Left colon (tissue), 2 donors: ENCODE measurements at regions of chr6 and their contacts with region 1.

Region 1: GRCh38 chr6:105077596-105078385 is 102.0 kb downstream of the POPDC3 start:
- DNase-seq: no peak
- ATAC-seq: no peak

Region 2: DNA sequence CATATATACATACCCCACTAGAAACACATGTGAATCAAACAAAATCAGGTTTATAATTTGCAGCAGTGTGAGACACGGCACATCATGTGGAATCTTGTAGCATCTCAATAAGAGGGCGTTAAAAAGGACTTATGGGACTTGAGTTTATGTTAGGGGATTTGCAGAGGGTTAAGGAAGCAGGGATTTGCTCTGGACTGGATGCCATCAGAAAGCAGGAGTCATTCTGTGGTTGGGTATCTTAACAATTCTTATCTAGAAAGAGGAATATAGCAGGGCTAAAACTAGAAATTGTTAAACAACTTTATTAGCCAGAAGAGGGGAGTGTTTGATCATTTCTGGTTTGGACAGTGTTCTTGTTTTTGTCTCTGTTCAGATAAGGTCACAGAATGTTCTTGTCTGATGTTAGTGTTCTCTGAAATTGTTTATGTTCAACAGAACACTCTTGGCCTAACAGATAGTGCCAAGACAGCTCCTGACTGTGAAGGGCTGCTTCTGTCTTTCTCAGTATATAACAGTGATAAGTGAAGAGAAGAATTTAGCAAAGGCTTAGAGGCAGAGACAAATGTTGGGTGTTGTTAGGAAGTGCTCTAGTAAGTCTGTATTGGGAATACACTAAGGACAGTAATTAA is 81.7 kb before region 1 on chr6:
- intact Hi-C with region 1: loop called in 1 of 2 experiments (anchors 5 kb)
- DNase-seq: no peak
- ATAC-seq: no peak